CD4-positive, alpha-beta T cell (primary cell): ENCODE measurements at regions of chr5 and their contacts with region 1.

Region 1: GRCh38 chr5:148179234-148179824 is 11.0 kb downstream of the SPINK14 start:
- DNase-seq: peak in 4 of 14 experiments; percentile 4 to 69 (median 61)
- ATAC-seq: peak; percentile 49
- H3K4me3 ChIP-seq: no peak overlapping the region
- H3K4me3 Mint-ChIP-seq: no peak overlapping the region
- H3K27ac ChIP-seq: no peak overlapping the region
- H3K27ac Mint-ChIP-seq: no peak overlapping the region
- H3K4me1 ChIP-seq: no peaks in the 10 kb centered on the region
- H3K4me1 Mint-ChIP-seq: no peaks in the 10 kb centered on the region
- H3K27me3 ChIP-seq: peaks cover 0 to 6% of the 10 kb centered on the region in 2 experiments
- H3K27me3 Mint-ChIP-seq: peaks cover 19% of the 10 kb centered on the region
- CTCF ChIP-seq: peak; percentile 67

Region 2: GRCh38 chr5:148353634-148354033 is 174.3 kb after region 1 on chr5:
- CTCF ChIA-PET with region 1: no interaction called
- POLR2A ChIA-PET with region 1: no interaction called
- intact Hi-C with region 1: loop called in 1 of 2 experiments (anchors 5 kb)
- DNase-seq: peak in 1 of 14 experiments; percentile 4
- ATAC-seq: no peak
- H3K4me3 ChIP-seq: no peak overlapping the region
- H3K4me3 Mint-ChIP-seq: no peak overlapping the region
- H3K27ac ChIP-seq: no peak overlapping the region
- H3K27ac Mint-ChIP-seq: no peak overlapping the region
- H3K4me1 ChIP-seq: no peaks in the 10 kb centered on the region
- H3K4me1 Mint-ChIP-seq: no peaks in the 10 kb centered on the region
- H3K27me3 ChIP-seq: no peaks in the 10 kb centered on the region
- H3K27me3 Mint-ChIP-seq: no peaks in the 10 kb centered on the region
- CTCF ChIP-seq: no peak

Region 3: DNA sequence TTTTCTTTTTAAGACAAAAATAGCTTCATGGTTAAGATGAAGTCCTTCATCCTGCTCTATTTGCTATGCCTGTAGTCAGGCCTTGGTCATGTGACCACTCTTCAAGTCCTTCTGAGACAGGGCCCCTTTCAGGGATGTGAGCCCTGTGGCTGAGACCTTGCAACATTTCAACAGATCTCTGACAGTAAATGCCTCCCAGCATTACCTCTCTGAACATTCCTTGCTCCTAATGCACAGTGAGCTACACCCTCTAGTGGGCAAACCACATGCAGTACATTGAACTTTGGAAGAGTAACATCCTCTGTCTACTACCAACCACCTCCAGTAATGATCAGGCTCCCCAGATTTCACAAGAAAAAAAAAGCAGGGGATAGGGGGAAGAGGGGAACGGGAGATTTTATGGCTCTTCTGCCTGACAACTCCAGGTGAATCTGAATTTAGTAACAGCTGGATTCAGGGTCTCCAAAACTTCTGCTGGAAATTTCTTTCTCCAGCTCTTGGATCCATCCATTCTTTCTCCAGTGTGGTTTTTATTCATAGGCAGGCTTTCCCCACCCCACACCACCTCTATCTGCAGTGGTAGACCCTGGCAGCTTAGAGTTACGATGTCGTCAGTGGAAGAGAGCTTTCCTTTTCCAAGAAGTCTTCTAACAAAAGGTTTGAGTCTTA is 195.5 kb after region 1 on chr5:
- CTCF ChIA-PET with region 1: interaction called, 3 read pairs
- POLR2A ChIA-PET with region 1: no interaction called
- intact Hi-C with region 1: loop called in 1 of 2 experiments (anchors 2 kb)
- DNase-seq: peak in 6 of 14 experiments; percentile 1 to 52 (median 28)
- ATAC-seq: peak; percentile 62
- H3K4me3 ChIP-seq: no peak overlapping the region
- H3K4me3 Mint-ChIP-seq: no peak overlapping the region
- H3K27ac ChIP-seq: no peak overlapping the region
- H3K27ac Mint-ChIP-seq: no peak overlapping the region
- H3K4me1 ChIP-seq: no peaks in the 10 kb centered on the region
- H3K4me1 Mint-ChIP-seq: peaks cover 7% of the 10 kb centered on the region
- H3K27me3 ChIP-seq: no peaks in the 10 kb centered on the region
- H3K27me3 Mint-ChIP-seq: no peaks in the 10 kb centered on the region
- CTCF ChIP-seq: peak; percentile 52

Region 4: DNA sequence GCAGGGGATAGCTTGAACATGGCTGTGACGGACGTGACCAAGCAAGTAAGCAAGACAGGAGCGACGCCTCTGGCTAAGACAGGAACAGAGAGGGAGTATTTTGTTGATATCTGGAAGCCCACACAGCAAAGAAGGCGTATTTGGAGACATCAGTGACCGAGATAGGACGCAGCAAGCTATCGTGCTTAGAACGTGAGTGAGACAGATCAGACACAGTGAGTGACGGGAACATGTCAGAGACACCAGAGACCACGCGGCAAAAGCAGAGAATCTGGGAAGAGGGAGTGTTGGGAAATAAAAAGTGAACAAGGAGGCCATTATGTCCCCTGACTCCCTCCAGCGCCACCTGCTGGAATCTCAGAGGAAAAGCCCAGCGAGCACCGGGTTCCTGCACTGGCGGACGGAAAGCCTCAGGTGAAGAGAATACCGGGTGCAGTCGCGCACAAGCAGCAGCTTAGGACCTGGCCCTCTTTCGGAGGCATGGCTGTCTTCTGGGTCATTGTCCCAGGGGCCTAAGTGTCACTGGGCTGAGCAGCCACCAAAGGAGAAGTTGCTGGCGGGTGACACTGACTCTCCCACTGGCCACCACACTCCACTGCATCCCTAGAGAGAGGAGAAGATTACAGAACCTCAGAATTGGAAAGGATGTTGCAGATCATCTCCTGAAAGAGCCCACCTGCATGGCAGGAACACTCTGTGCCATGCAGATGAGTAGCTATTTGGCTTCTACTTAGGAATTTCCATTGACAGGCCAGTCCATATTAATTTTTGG is 303.5 kb after region 1 on chr5:
- CTCF ChIA-PET with region 1: no interaction called
- POLR2A ChIA-PET with region 1: no interaction called
- intact Hi-C with region 1: loop called (anchors 5 to 10 kb)
- DNase-seq: peak; percentile 29 to 72 (median 42)
- ATAC-seq: peak; percentile 55
- H3K4me3 ChIP-seq: no peak overlapping the region
- H3K4me3 Mint-ChIP-seq: no peak overlapping the region
- H3K27ac ChIP-seq: no peak overlapping the region
- H3K27ac Mint-ChIP-seq: no peak overlapping the region
- H3K4me1 ChIP-seq: no peaks in the 10 kb centered on the region
- H3K4me1 Mint-ChIP-seq: no peaks in the 10 kb centered on the region
- H3K27me3 ChIP-seq: peaks cover 2 to 11% of the 10 kb centered on the region in 2 experiments
- H3K27me3 Mint-ChIP-seq: peaks cover 56% of the 10 kb centered on the region
- CTCF ChIP-seq: peak; percentile 60

Region 5: DNA sequence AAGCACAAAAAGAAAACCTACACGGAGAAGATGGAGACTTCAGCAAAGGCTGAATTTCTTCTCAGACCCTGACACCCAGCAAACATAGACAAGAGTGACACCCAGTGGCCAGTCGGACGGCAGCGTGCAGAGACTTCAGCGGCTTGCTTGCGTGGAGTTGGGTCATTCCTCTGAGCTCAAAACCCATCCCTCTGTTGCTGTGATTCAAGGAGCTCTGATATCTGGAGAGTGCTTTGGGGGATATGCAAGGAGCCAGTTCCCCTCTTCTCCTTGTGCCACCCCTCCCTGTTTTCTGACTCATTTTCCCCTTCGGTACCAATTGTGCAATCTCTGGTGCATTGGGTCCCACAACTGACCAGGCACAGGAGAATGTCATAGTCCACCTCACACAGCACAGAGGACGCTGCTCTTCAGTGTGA is 856.1 kb after region 1 on chr5:
- CTCF ChIA-PET with region 1: no interaction called
- POLR2A ChIA-PET with region 1: no interaction called
- intact Hi-C with region 1: loop called (anchors 5 to 10 kb)
- DNase-seq: peak; percentile 47 to 78 (median 57)
- ATAC-seq: peak; percentile 74
- H3K4me3 ChIP-seq: no peak overlapping the region
- H3K4me3 Mint-ChIP-seq: no peak overlapping the region
- H3K27ac ChIP-seq: no peak overlapping the region
- H3K27ac Mint-ChIP-seq: no peak overlapping the region
- H3K4me1 ChIP-seq: peaks cover 6% of the 10 kb centered on the region
- H3K4me1 Mint-ChIP-seq: peaks cover 25% of the 10 kb centered on the region
- H3K27me3 ChIP-seq: no peaks in the 10 kb centered on the region
- H3K27me3 Mint-ChIP-seq: peaks cover 5% of the 10 kb centered on the region
- CTCF ChIP-seq: peak; percentile 83